IMR-90 (cell line): ENCODE measurements at regions of chr1 and their contacts with region 1.

Region 1: DNA sequence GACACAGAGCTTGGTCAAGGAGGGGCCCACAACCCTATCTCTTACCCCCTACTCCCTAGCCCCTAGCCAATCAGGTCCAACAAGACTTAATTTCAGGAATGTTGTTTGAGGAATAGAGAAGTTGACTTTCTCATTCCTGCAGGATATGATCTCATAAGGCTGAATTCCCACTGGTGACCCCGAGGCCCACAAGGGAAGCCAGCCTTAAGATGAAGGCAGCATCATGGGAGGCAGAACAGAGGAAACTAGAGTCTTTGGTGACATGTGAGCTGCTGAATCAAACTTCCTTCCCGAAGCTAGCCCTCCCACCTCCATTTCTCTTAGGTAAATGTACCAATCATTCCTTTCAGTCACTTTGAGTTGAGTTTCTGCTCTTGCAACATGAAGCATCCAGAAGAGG is 9.1 kb upstream of the PDIK1L start:
- DNase-seq: peak; percentile 47
- ATAC-seq: 0 out of 2 replicates have a peak, but pooled peaks have one; percentile 15
- H3K4me3 ChIP-seq: no peak overlapping the region
- H3K27ac ChIP-seq: no peak overlapping the region
- H3K4me1 ChIP-seq: peaks cover 2% of the 10 kb centered on the region; the same call in 1 of the 2 replicates
- H3K27me3 ChIP-seq: no peaks in the 10 kb centered on the region; the same call in 1 of the 2 replicates
- CTCF ChIP-seq: no peak
- POLR2A ChIP-seq: no peak
- RAD21 ChIP-seq: no peak

Region 2: GRCh38 chr1:25658791-25659431 is 443.6 kb before region 1 on chr1:
- CTCF ChIA-PET with region 1: no interaction called
- POLR2A ChIA-PET with region 1: no interaction called
- dilution Hi-C with region 1: no loop called
- in situ Hi-C with region 1: no loop called
- intact Hi-C with region 1: no loop called
- DNase-seq: no peak
- ATAC-seq: no peak; the same call in 1 of the 2 replicates
- H3K4me3 ChIP-seq: no peak overlapping the region
- H3K27ac ChIP-seq: no peak overlapping the region
- H3K4me1 ChIP-seq: peaks cover 5% of the 10 kb centered on the region; the same call in 1 of the 2 replicates
- H3K27me3 ChIP-seq: no peaks in the 10 kb centered on the region
- CTCF ChIP-seq: no peak
- POLR2A ChIP-seq: no peak
- RAD21 ChIP-seq: no peak

Region 3: GRCh38 chr1:26035959-26036755 is 66.4 kb before region 1 on chr1:
- CTCF ChIA-PET with region 1: interaction called, 3 read pairs
- POLR2A ChIA-PET with region 1: no interaction called
- dilution Hi-C with region 1: no loop called
- in situ Hi-C with region 1: loop called (anchors 5 kb)
- intact Hi-C with region 1: loop called (anchors 1 kb)
- DNase-seq: peak; percentile 53
- ATAC-seq: peak; percentile 94
- H3K4me3 ChIP-seq: peak overlapping the region; percentile 66
- H3K27ac ChIP-seq: no peak overlapping the region
- H3K4me1 ChIP-seq: peaks cover 6% of the 10 kb centered on the region
- H3K27me3 ChIP-seq: peaks cover 17% of the 10 kb centered on the region; the same call in 1 of the 2 replicates
- CTCF ChIP-seq: peak; percentile 96
- POLR2A ChIP-seq: no peak
- RAD21 ChIP-seq: peak; percentile 88

Region 4: DNA sequence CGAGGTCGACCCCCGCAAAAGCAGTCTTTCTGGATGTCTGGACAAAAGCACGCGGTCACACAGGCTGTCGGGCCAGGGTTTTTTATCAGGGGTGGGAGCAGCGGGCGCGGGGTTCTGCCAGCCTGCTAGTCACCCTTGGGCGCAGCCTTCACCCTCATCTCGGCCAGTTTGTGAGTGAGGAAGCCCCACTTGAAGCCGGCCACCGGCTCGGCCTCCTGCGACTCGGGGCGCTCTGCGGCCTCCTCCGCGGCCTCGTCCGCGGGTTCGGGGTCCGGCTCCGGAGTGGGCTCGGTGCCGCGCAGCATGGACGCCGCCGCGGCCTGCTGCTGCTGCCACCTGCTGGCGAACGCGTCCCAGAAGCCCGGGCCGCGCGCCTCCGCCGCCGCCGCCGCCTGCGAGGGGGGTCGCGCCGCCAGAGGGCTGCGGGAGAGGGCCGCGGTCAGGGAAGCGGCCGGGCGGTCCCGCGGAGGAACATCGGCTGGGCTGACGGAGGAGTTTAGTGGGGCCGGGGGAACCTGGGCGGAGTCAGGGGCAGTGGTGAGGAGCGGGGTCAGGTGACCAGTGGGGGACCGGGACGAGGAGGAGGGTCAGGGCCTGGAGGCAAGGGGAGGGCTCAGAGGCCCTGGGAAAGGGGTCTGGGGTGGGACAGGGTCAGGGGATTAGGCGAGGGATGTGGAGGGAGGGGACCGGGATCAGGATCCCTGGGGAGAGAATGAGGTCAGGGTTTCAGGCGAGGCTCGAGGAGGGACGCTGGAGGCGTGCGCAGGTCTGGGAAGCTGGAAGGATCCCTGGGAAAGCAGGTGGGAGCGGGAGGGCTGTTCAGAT is 61.7 kb after region 1 on chr1:
- CTCF ChIA-PET with region 1: no interaction called
- POLR2A ChIA-PET with region 1: no interaction called
- dilution Hi-C with region 1: no loop called
- in situ Hi-C with region 1: no loop called
- intact Hi-C with region 1: loop called (anchors 1 kb)
- DNase-seq: no peak
- ATAC-seq: peak; percentile 70
- H3K4me3 ChIP-seq: peak overlapping the region; percentile 26
- H3K27ac ChIP-seq: no peak overlapping the region
- H3K4me1 ChIP-seq: peaks cover 4% of the 10 kb centered on the region
- H3K27me3 ChIP-seq: peaks cover 16% of the 10 kb centered on the region; the same call in 1 of the 2 replicates
- CTCF ChIP-seq: peak; percentile 62
- POLR2A ChIP-seq: no peak
- RAD21 ChIP-seq: peak; percentile 38; the same call in 1 of the 2 replicates

Region 5: GRCh38 chr1:26321315-26322041 is 219.0 kb after region 1 on chr1:
- CTCF ChIA-PET with region 1: no interaction called
- POLR2A ChIA-PET with region 1: no interaction called
- dilution Hi-C with region 1: no loop called
- in situ Hi-C with region 1: no loop called
- intact Hi-C with region 1: loop called (anchors 1 kb)
- DNase-seq: peak; percentile 77
- ATAC-seq: peak; percentile 100
- H3K4me3 ChIP-seq: no peak overlapping the region
- H3K27ac ChIP-seq: no peak overlapping the region
- H3K4me1 ChIP-seq: peaks cover 3% of the 10 kb centered on the region
- H3K27me3 ChIP-seq: peaks cover 9% of the 10 kb centered on the region
- CTCF ChIP-seq: peak; percentile 97
- POLR2A ChIP-seq: 0 out of 2 replicates have a peak, but pooled peaks have one; percentile 38
- RAD21 ChIP-seq: peak; percentile 98

Region 6: DNA sequence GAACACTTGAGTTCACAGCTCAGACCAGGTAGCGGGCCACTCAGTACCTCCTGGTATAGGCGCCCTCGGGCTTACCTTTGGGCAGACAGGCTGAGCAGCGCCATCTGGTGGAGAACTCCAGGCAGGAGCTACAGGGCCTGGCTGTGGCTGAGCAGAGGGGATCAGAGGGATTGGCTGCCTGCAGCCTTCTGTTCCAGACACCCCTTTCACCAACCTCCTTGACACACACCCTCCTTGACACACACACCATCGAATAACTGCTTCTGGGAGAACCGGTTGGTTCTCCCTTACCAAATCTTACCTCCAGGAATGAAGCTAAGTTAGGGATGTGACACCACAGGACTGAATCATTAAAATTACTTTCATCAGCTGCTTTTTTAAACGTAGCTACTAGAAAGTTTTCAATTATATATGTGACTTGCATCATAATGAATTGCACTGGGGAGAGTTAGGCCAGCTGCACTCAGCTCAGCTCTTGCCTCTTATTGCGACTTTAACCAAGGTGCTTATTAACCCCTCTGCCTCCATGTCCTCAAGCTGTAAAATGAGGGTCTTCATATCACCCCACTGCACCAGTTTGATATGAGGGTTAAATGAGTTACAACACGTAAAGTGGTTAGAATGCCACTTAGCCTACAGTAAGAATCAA is 314.7 kb after region 1 on chr1:
- CTCF ChIA-PET with region 1: no interaction called
- POLR2A ChIA-PET with region 1: no interaction called
- dilution Hi-C with region 1: no loop called
- in situ Hi-C with region 1: no loop called
- intact Hi-C with region 1: loop called (anchors 1 kb)
- DNase-seq: peak; percentile 64
- ATAC-seq: peak; percentile 97
- H3K4me3 ChIP-seq: no peak overlapping the region
- H3K27ac ChIP-seq: no peak overlapping the region
- H3K4me1 ChIP-seq: no peaks in the 10 kb centered on the region
- H3K27me3 ChIP-seq: peaks cover 64% of the 10 kb centered on the region
- CTCF ChIP-seq: peak; percentile 78
- POLR2A ChIP-seq: no peak
- RAD21 ChIP-seq: peak; percentile 71